ENCODE measurements at regions of chr22 and their contacts with region 1.

Region 1: DNA sequence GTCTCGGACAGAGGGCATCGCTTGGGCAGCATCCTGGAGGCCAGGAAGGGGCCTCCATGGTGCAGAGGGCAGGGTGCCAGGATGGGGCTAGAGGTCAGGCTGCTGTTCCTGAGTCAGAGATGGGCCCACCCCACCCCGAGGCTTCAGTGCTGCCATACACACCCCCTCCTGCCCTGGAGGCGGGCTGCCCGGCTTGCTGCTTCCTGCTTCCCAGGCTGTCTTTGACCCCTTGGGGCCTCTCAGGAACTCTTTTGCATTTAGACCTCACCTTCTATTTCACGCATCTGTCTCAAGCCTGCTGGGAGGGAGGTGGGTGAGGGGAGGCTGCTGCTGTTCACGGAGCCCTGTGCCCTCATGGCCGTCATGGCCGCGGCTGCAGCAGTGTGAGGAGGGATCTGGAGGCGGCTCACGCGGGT is 6.6 kb upstream of the GRAMD4 start:
- DNase-seq: no peak
- H3K4me3 Mint-ChIP-seq: peak overlapping the region; percentile 85
- H3K27ac Mint-ChIP-seq: peak overlapping the region; percentile 89
- H3K4me1 Mint-ChIP-seq: peaks cover 38% of the 10 kb centered on the region
- H3K27me3 Mint-ChIP-seq: no peaks in the 10 kb centered on the region

Region 2: DNA sequence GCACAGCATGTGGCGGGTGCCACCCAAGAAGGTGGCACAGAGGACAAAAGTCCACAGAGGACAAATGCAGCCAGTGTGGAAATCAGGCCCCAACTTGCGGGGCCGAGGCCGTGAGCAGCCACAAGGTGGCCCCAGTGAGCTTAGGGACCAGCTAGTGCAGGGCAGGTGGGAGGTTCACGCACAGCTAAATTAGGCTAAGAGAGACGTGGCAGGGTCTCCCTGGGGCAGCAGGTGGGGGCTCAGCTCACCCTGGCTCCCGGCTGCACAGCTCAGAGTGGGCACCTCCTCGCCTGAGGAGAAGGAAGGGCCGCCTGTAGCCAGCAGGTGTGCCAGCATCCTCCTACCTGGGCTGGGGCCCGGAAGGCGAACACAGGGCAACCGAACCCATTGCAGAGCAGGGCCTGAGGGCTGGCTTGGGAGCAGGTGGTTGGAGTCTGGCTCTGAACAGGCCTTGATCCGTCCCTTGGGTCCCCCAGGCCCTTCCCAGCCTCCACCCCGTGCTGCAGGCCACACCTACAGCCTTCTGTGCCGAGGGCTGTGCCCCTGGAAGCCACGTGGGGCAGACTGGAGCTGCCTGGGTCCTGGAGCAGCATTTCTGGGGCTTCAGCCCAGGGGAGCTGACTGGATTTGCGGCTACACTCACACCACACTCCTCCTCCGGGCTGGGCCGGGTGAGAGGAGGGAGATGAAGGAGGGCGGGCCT is 50.1 kb before region 1 on chr22:
- intact Hi-C with region 1: loop called (anchors 2 kb)
- DNase-seq: peak; percentile 68
- H3K4me3 Mint-ChIP-seq: no peak overlapping the region
- H3K27ac Mint-ChIP-seq: no peak overlapping the region
- H3K4me1 Mint-ChIP-seq: peaks cover 8% of the 10 kb centered on the region
- H3K27me3 Mint-ChIP-seq: no peaks in the 10 kb centered on the region

Region 3: GRCh38 chr22:46576556-46577367 is 36.9 kb before region 1 on chr22:
- intact Hi-C with region 1: loop called (anchors 1 kb)
- DNase-seq: peak; percentile 58
- H3K4me3 Mint-ChIP-seq: peak overlapping the region; percentile 77
- H3K27ac Mint-ChIP-seq: no peak overlapping the region
- H3K4me1 Mint-ChIP-seq: peaks cover 38% of the 10 kb centered on the region
- H3K27me3 Mint-ChIP-seq: no peaks in the 10 kb centered on the region

Region 4: DNA sequence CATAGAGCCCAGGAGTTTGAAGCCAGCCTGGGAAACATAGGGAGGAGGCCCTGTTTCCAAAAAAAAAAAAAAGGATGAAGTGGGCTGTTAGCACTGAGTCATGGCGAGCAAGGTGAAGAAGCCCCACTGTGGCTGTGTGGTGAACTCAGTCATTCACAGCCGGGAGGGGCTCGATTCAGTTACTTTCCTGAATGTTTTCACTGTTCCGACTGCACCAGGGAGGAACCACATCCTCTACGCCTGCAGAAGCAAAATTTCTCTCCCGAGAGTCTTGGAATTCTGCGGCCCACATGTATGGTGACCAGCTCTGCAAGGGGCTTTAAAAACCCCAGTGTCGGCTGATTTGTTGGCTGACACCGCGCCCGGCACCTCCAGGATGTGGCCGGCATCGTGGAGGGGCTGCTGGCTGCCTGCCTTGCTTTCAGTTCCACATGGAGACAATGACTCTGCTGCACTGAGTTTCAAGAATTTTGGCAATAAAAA is 21.2 kb before region 1 on chr22:
- intact Hi-C with region 1: loop called (anchors 1 kb)
- DNase-seq: peak; percentile 55
- H3K4me3 Mint-ChIP-seq: peak overlapping the region; percentile 78
- H3K27ac Mint-ChIP-seq: peak overlapping the region; percentile 81
- H3K4me1 Mint-ChIP-seq: peaks cover 24% of the 10 kb centered on the region
- H3K27me3 Mint-ChIP-seq: no peaks in the 10 kb centered on the region

Region 5: GRCh38 chr22:46652081-46652846 is 38.6 kb after region 1 on chr22:
- intact Hi-C with region 1: loop called (anchors 2 kb)
- DNase-seq: no peak
- H3K4me3 Mint-ChIP-seq: peak overlapping the region; percentile 41
- H3K27ac Mint-ChIP-seq: peak overlapping the region; percentile 94
- H3K4me1 Mint-ChIP-seq: peaks cover 39% of the 10 kb centered on the region
- H3K27me3 Mint-ChIP-seq: no peaks in the 10 kb centered on the region

Region 6: DNA sequence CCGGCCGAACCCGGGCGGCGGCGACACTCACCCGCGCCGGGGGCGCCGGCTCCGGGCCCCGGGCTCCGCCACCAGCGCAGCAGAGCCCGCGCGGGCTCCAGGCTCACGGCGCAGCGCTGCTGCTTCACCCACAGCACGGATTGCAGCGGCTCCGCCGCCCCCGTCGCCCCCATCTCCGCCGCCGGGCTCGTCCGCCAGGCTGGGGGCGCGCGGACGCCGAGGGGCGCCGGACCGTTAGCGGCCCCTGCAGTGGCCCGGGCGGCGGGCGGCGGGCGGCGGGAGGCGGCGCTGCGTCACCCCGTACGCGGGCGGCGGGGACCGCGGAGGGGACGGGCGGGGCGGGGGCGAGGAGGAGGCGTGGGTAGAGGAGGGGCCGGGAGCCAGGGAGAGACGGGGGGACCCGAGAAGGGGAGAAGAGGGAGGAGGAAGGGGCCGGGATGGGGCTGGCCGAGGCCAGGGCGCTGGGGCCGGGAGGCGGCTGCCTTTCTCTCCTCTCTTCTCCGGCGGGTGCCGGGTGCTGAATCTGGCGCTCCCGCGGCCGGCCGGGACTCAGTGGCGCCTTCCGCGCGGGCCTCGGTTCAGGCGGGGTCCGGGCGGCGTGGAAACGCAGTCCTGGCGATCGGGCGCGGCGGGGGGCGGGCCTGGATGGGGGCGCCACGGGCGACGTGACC is 124.5 kb after region 1 on chr22 and contains the start of gene CERK:
- intact Hi-C with region 1: loop called (anchors 5 kb)
- DNase-seq: peak; percentile 68
- H3K4me3 Mint-ChIP-seq: peak within 1 kb of the TSS; percentile 99
- H3K27ac Mint-ChIP-seq: peak within 1 kb of the TSS; percentile 97
- H3K4me1 Mint-ChIP-seq: peaks cover 46% of the 10 kb centered on the region
- H3K27me3 Mint-ChIP-seq: no peaks in the 10 kb centered on the region
- total RNA-seq, gene CERK: 69.6 and 76.5 TPM in 2 replicates